H1 (cell line): ENCODE measurements at regions of chr2 and their contacts with region 1.

Region 1: GRCh38 chr2:11778923-11779757 is 32.7 kb downstream of the LPIN1 start:
- DNase-seq: peak; percentile 19 to 95
- H3K4me3 ChIP-seq: no peak overlapping the region
- H3K27ac ChIP-seq: no peak overlapping the region
- H3K4me1 ChIP-seq: peaks cover 0 to 3% (median 1%) of the 10 kb centered on the region in 4 experiments; a peak in 3 of 7 replicates
- H3K27me3 ChIP-seq: no peaks in the 10 kb centered on the region; a peak in 1 of 7 replicates
- CTCF ChIP-seq: peak; percentile 81 to 95 (median 89)
- EP300 ChIP-seq: no peak
- POLR2A ChIP-seq: no peak
- RAD21 ChIP-seq: peak; percentile 92 to 93

Region 2: GRCh38 chr2:11697103-11697871 is 81.9 kb before region 1 on chr2:
- CTCF ChIA-PET with region 1: interaction called, 48 read pairs
- POLR2A ChIA-PET with region 1: no interaction called
- DNase-seq: no peak
- H3K4me3 ChIP-seq: no peak overlapping the region
- H3K27ac ChIP-seq: no peak overlapping the region
- H3K4me1 ChIP-seq: no peaks in the 10 kb centered on the region
- H3K27me3 ChIP-seq: no peaks in the 10 kb centered on the region
- CTCF ChIP-seq: no peak
- EP300 ChIP-seq: no peak
- POLR2A ChIP-seq: no peak
- RAD21 ChIP-seq: no peak

Region 3: GRCh38 chr2:11732587-11732986 is 46.6 kb before region 1 on chr2:
- CTCF ChIA-PET with region 1: interaction called, 40 read pairs
- POLR2A ChIA-PET with region 1: no interaction called
- DNase-seq: no peak
- H3K4me3 ChIP-seq: no peak overlapping the region
- H3K27ac ChIP-seq: no peak overlapping the region
- H3K4me1 ChIP-seq: no peaks in the 10 kb centered on the region; a peak in 1 of 7 replicates
- H3K27me3 ChIP-seq: no peaks in the 10 kb centered on the region
- CTCF ChIP-seq: no peak
- EP300 ChIP-seq: no peak
- POLR2A ChIP-seq: no peak
- RAD21 ChIP-seq: no peak

Region 4: DNA sequence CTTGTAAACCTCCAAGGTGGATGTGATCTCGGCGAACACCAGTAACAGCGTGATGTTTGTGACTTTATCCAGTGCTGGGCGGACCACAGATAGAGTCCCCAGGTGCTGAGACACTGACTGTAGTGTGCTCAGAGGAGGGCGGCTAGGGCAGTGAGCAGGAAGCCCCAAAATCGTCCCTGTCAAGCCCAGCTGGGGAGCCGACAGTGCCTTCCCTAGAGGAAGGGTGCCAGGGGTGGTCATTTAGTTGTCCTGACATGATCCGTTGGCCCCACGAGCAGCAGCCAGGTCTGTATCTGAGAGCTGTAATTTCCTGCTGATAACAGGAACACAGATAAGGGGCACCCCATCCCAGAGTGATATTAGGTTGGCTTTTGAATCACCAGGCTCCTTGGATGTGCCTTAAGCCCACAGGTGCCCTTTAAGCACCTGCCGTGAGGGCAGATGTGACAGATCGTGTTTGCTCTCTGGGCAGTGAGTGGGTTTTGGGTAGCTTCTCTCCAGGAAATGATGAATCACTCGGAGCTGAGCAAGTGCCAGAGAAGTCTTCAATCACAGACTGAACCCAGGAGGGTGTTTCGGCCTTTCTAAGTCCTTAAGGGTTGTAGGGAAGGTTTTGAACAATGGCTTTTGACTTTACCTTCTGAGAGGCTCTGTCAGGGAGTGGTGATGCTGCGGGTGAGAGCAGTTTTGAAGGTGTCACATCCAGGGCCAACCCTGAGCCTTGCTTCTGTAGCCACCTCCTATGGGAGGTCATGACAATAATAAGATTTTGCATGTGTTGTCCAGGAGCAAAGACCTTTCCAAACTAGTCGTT is 25.0 kb before region 1 on chr2:
- CTCF ChIA-PET with region 1: interaction called, 24 read pairs
- POLR2A ChIA-PET with region 1: no interaction called
- DNase-seq: no peak
- H3K4me3 ChIP-seq: no peak overlapping the region
- H3K27ac ChIP-seq: no peak overlapping the region
- H3K4me1 ChIP-seq: peaks cover 0 to 14% (median under 1%) of the 10 kb centered on the region in 4 experiments; a peak in 4 of 7 replicates
- H3K27me3 ChIP-seq: no peaks in the 10 kb centered on the region
- CTCF ChIP-seq: no peak
- EP300 ChIP-seq: no peak
- POLR2A ChIP-seq: no peak
- RAD21 ChIP-seq: no peak